ENCODE measurements at regions of chr12 and their contacts with region 1.

Region 1: DNA sequence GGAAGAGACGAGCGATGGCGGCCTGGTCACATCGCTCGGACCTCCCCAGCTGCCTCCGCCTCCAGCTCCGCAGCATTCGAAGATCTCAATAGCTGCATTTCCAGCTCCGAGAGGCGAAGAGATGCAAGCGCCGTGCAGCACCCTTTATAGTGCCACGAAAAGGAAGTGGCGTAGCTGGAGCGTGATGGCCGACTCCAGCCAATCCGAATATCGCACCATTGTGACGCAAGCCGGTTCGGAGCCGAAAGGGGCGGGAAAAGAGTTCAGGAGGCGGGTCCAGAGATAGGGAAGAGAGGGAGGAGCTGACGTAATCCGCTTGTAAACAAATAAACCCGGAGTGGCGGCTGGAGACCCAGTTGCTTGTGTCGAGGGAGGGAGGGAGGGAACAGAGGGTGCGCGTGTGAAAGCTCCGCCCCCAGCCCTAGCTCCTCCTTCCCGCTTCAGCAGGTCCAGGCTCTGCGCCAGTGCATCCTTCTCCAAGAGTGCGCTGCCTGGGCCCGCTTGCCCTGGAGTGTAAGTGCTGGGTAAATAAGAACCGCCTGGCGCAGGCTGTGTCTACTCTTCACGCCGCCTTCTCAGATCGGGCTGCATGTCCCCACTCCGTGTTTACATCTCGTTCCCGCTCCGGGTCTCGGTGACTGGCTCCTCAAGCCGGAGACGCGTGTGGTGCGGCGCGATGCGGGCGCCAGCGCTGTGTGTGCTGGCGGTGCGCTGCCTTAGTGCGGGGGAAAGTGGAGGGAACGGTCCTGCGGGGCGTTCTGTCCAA is at the start of gene BTG1:
- DNase-seq: peak; percentile 99 to 100 (median 100)
- H3K4me3 ChIP-seq: peak within 1 kb of the TSS; percentile 89 to 96
- H3K4me3 Mint-ChIP-seq: peak within 1 kb of the TSS; percentile 92 to 100 (median 100)
- H3K27ac ChIP-seq: peak within 1 kb of the TSS; percentile 86
- H3K27ac Mint-ChIP-seq: peak within 1 kb of the TSS; percentile 95 to 100 (median 100)
- H3K4me1 ChIP-seq: peaks cover 23% of the 10 kb centered on the region
- H3K4me1 Mint-ChIP-seq: peaks cover 9 to 37% (median 21%) of the 10 kb centered on the region in 4 donors
- H3K27me3 ChIP-seq: no peaks in the 10 kb centered on the region
- H3K27me3 Mint-ChIP-seq: no peaks in the 10 kb centered on the region
- total RNA-seq, gene BTG1: 431 to 469 TPM

Region 2: GRCh38 chr12:91140026-91140931 is 1005.6 kb before region 1 on chr12:
- CTCF ChIA-PET with region 1: no interaction called
- POLR2A ChIA-PET with region 1: no interaction called
- intact Hi-C with region 1: no loop called
- DNase-seq: no peak
- H3K4me3 ChIP-seq: no peak overlapping the region
- H3K4me3 Mint-ChIP-seq: no peak overlapping the region
- H3K27ac ChIP-seq: no peak overlapping the region
- H3K27ac Mint-ChIP-seq: no peak overlapping the region
- H3K4me1 ChIP-seq: no peaks in the 10 kb centered on the region
- H3K4me1 Mint-ChIP-seq: no peaks in the 10 kb centered on the region
- H3K27me3 ChIP-seq: no peaks in the 10 kb centered on the region
- H3K27me3 Mint-ChIP-seq: peaks cover 0 to 4% of the 10 kb centered on the region in 2 donors

Region 3: DNA sequence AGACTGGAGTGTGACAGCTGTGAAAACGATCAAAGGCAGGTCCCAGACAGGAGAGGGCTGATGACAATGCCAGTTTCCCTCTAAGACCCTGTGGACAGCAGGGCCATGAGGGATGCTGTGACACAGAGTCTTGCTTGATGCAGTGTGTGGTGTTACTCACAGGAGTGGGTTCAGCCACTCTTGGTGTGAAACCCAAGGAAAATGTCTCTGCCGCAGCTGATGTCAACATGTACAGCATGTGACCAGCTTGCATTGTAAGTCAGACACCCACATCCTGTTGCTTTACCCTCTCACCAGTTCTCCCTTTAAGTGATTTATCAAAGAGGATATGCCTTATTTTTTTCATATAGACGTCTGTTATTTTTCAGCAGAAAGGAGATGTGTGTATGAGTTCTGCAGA is 268.9 kb before region 1 on chr12:
- CTCF ChIA-PET with region 1: interaction called, 6 read pairs
- POLR2A ChIA-PET with region 1: interaction called, 239 read pairs
- intact Hi-C with region 1: loop called (anchors 1 kb)
- DNase-seq: peak; percentile 87 to 98 (median 93)
- H3K4me3 ChIP-seq: peak overlapping the region; percentile 9 to 14
- H3K4me3 Mint-ChIP-seq: peak overlapping the region; percentile 73 to 86 (median 79)
- H3K27ac ChIP-seq: peak overlapping the region; percentile 93
- H3K27ac Mint-ChIP-seq: peak overlapping the region; percentile 99 to 100 (median 100)
- H3K4me1 ChIP-seq: peaks cover 76% of the 10 kb centered on the region
- H3K4me1 Mint-ChIP-seq: peaks cover 54 to 79% (median 64%) of the 10 kb centered on the region in 4 donors
- H3K27me3 ChIP-seq: no peaks in the 10 kb centered on the region
- H3K27me3 Mint-ChIP-seq: no peaks in the 10 kb centered on the region

Region 4: DNA sequence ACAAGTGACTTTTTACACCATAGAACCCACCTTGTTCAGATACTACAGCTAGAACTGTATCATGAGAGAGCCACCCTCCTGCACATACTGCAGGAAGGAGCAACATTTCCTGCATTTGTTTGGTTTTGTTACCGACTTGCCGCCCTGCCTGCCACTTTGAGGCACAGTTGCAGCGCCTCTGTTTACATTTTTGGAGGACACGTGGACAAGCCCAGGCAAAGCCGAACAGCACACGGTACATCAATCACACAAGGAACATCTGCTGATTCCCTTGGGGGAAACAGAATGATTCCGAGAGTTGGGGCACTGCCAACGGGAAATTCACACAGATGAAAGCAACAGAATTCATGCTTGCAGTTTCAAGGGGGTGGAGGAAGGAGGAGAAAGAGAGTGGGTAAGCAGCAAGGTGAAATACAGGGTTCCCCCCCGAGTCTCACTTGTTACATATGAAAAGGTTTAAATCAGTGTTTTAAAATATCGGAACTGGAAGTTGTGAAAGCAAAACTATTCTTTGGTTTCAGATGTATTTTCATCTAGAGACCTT is 111.0 kb before region 1 on chr12:
- CTCF ChIA-PET with region 1: interaction called, 46 read pairs
- POLR2A ChIA-PET with region 1: interaction called, 525 read pairs
- intact Hi-C with region 1: loop called (anchors 1 kb)
- DNase-seq: peak; percentile 55 to 62 (median 59)
- H3K4me3 ChIP-seq: peak overlapping the region; percentile 24 to 44
- H3K4me3 Mint-ChIP-seq: peak overlapping the region; percentile 83 to 97 (median 91)
- H3K27ac ChIP-seq: peak overlapping the region; percentile 65
- H3K27ac Mint-ChIP-seq: peak overlapping the region; percentile 97 to 100 (median 98)
- H3K4me1 ChIP-seq: peaks cover 92% of the 10 kb centered on the region
- H3K4me1 Mint-ChIP-seq: peaks cover 66 to 97% (median 81%) of the 10 kb centered on the region in 4 donors
- H3K27me3 ChIP-seq: no peaks in the 10 kb centered on the region
- H3K27me3 Mint-ChIP-seq: no peaks in the 10 kb centered on the region

Region 5: DNA sequence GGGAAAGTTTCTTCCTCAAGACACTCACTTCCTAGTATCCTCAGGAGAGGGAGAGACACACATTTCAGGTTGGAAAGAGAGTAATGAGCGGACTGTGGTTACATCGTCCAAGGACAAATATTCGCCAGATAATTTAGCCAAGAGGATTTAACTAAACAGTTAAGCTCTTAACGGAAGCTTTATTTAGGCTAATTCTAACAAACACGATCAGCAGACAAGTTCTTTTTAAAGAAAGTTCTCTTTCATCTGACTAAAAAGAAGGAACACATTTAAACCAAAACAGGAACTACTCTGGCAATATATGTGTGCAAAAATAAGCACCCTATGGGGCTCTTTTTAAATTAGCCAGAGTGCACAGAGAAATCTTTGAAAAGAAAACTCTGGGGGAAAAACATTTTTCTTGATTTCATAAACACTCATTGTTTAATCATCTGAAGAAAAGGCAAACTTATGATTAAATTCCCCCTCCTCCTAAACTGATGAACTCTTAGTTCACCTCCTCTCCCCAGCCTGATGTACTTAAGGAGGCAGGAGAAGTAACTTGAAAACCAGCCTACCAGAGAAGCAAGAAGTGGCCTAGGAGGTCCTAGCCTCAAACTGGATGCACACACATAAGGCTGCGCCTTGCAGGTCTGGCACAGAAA is 13.0 kb after region 1 on chr12:
- CTCF ChIA-PET with region 1: interaction called, 4 read pairs
- POLR2A ChIA-PET with region 1: interaction called, 25 read pairs
- intact Hi-C with region 1: loop called (anchors 1 kb)
- DNase-seq: peak in 1 of 5 donors; percentile 1
- H3K4me3 ChIP-seq: no peak overlapping the region
- H3K4me3 Mint-ChIP-seq: peak overlapping the region; percentile 23 to 83 (median 64)
- H3K27ac ChIP-seq: no peak overlapping the region
- H3K27ac Mint-ChIP-seq: peak overlapping the region; percentile 51 to 94 (median 84)
- H3K4me1 ChIP-seq: peaks cover 34% of the 10 kb centered on the region
- H3K4me1 Mint-ChIP-seq: peaks cover 26 to 53% (median 37%) of the 10 kb centered on the region in 4 donors
- H3K27me3 ChIP-seq: no peaks in the 10 kb centered on the region
- H3K27me3 Mint-ChIP-seq: no peaks in the 10 kb centered on the region

Region 6: GRCh38 chr12:92408072-92408900 is 262.4 kb after region 1 on chr12:
- CTCF ChIA-PET with region 1: interaction called, 91 read pairs
- POLR2A ChIA-PET with region 1: interaction called, 630 read pairs
- intact Hi-C with region 1: loop called (anchors 1 kb)
- DNase-seq: peak in 3 of 5 donors; percentile 38 to 45 (median 45)
- H3K4me3 ChIP-seq: no peak overlapping the region
- H3K4me3 Mint-ChIP-seq: peak overlapping the region in 5 of 8 donors; percentile 2 to 80 (median 30)
- H3K27ac ChIP-seq: no peak overlapping the region
- H3K27ac Mint-ChIP-seq: peak overlapping the region in 6 of 7 donors; percentile 30 to 91 (median 77)
- H3K4me1 ChIP-seq: peaks cover 40% of the 10 kb centered on the region
- H3K4me1 Mint-ChIP-seq: peaks cover 38 to 73% (median 49%) of the 10 kb centered on the region in 4 donors
- H3K27me3 ChIP-seq: no peaks in the 10 kb centered on the region
- H3K27me3 Mint-ChIP-seq: no peaks in the 10 kb centered on the region

Region 7: DNA sequence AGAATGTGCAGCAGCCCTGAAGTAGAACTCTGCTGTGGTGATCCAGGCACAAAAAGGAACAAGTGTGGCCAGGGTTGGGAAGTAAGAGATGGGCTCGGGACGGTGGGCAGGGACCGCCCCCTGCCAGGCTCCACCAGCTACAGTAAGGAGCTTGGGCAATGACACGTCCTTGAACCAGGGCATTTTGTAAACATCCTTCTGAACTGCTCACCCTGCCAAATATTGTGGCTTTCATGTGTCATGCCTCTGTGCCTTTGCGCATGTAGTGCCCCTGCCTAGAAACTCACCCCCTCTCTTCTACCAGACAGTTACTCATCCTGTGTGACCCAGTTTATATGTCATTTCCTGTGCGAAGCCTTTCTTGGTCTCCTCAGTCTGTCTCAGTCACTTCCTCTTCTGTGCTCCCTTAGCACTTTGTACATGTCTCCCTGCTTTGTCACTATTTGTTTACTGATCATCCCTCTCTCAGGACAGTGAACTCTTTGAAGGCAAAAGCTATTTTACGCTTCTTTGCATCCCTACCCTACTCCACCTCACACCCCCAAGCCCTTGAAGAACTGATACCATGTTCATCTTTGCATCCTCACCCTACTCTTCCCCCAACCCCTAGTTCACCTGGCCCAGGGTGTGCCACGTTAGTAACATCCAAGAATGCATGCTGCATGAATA is 448.0 kb after region 1 on chr12:
- CTCF ChIA-PET with region 1: interaction called, 5 read pairs
- POLR2A ChIA-PET with region 1: interaction called, 114 read pairs
- intact Hi-C with region 1: loop called (anchors 1 kb)
- DNase-seq: peak; percentile 87 to 97 (median 94)
- H3K4me3 ChIP-seq: peak overlapping the region in 1 of 2 donors; percentile 37
- H3K4me3 Mint-ChIP-seq: peak overlapping the region in 7 of 8 donors; percentile 43 to 88 (median 71)
- H3K27ac ChIP-seq: peak overlapping the region; percentile 91
- H3K27ac Mint-ChIP-seq: peak overlapping the region; percentile 86 to 100 (median 100)
- H3K4me1 ChIP-seq: peaks cover 35% of the 10 kb centered on the region
- H3K4me1 Mint-ChIP-seq: peaks cover 27 to 38% (median 35%) of the 10 kb centered on the region in 4 donors
- H3K27me3 ChIP-seq: no peaks in the 10 kb centered on the region
- H3K27me3 Mint-ChIP-seq: no peaks in the 10 kb centered on the region

Measured in CD4-positive, alpha-beta memory T cell (primary cell).